Activated naive CD4-positive, alpha-beta T cell treated with anti-CD3 and anti-CD28 coated beads, Interleukin-2, amount 10 ng/mL, durations not matched to agents 7 days and 5 days (primary cell): ENCODE measurements at regions of chr10 and their contacts with region 1.

Region 1: GRCh38 chr10:73956476-73957359 is 41.2 kb upstream of the VCL start:
- DNase-seq: peak; percentile 57
- H3K4me3 Mint-ChIP-seq: peak overlapping the region; percentile 61
- H3K27ac Mint-ChIP-seq: peak overlapping the region; percentile 98
- H3K4me1 Mint-ChIP-seq: peaks cover 65% of the 10 kb centered on the region
- H3K27me3 Mint-ChIP-seq: no peaks in the 10 kb centered on the region

Region 2: DNA sequence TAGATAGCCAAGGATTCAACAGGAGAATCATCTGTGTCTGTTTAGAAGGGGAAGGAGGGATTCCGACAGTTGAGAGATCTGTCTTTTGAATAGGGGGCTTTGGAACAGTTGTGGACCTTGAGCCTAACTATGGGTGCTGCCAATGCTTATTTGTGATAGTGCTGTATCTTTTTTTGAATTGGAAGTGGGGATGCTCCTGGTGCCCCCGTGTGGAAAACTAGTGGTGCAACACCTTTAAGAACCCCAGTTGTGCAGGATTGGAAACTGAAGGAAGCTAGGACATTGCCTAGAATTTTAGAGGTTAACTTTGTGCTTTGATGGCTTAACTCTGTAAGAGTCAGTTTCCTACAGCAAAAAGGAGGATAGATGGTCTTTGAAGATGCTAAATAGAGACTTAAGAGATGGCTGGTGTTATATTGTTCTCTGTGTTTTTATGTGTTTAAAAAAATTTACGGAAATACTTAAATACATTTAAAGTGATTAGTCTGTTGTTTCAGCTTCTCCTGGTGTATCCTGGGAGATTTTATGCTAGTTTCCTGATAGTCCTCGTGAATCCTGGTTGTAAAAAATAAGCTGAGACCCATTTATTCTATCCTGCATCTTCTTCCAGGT is 124.6 kb after region 1 on chr10:
- CTCF ChIA-PET with region 1: interaction called, 12 read pairs
- DNase-seq: peak; percentile 58
- H3K4me3 Mint-ChIP-seq: no peak overlapping the region
- H3K27ac Mint-ChIP-seq: no peak overlapping the region
- H3K4me1 Mint-ChIP-seq: peaks cover 21% of the 10 kb centered on the region
- H3K27me3 Mint-ChIP-seq: no peaks in the 10 kb centered on the region

Region 3: GRCh38 chr10:74208091-74208524 is 251.4 kb after region 1 on chr10:
- CTCF ChIA-PET with region 1: no interaction called
- DNase-seq: no peak
- H3K4me3 Mint-ChIP-seq: no peak overlapping the region
- H3K27ac Mint-ChIP-seq: no peak overlapping the region
- H3K4me1 Mint-ChIP-seq: no peaks in the 10 kb centered on the region
- H3K27me3 Mint-ChIP-seq: no peaks in the 10 kb centered on the region